Activated CD8-positive, alpha-beta T cell treated with anti-CD3 and anti-CD28 coated beads, Interleukin-2, amount 10 ng/mL, durations not matched to agents 7 days and 5 days (primary cell): ENCODE measurements at regions of chr7 and their contacts with region 1.

Region 1: GRCh38 chr7:36627836-36628235 is 96.5 kb downstream of the AOAH start:
- DNase-seq: no peak
- ATAC-seq: no peak
- H3K4me3 Mint-ChIP-seq: no peak overlapping the region
- H3K27ac Mint-ChIP-seq: no peak overlapping the region
- H3K4me1 Mint-ChIP-seq: peaks cover 11% of the 10 kb centered on the region
- H3K27me3 Mint-ChIP-seq: no peaks in the 10 kb centered on the region

Region 2: GRCh38 chr7:36597090-36597775 is 30.6 kb before region 1 on chr7:
- CTCF ChIA-PET with region 1: no interaction called
- POLR2A ChIA-PET with region 1: no interaction called
- DNase-seq: no peak
- ATAC-seq: no peak
- H3K4me3 Mint-ChIP-seq: no peak overlapping the region
- H3K27ac Mint-ChIP-seq: no peak overlapping the region
- H3K4me1 Mint-ChIP-seq: peaks cover 26% of the 10 kb centered on the region
- H3K27me3 Mint-ChIP-seq: no peaks in the 10 kb centered on the region

Region 3: DNA sequence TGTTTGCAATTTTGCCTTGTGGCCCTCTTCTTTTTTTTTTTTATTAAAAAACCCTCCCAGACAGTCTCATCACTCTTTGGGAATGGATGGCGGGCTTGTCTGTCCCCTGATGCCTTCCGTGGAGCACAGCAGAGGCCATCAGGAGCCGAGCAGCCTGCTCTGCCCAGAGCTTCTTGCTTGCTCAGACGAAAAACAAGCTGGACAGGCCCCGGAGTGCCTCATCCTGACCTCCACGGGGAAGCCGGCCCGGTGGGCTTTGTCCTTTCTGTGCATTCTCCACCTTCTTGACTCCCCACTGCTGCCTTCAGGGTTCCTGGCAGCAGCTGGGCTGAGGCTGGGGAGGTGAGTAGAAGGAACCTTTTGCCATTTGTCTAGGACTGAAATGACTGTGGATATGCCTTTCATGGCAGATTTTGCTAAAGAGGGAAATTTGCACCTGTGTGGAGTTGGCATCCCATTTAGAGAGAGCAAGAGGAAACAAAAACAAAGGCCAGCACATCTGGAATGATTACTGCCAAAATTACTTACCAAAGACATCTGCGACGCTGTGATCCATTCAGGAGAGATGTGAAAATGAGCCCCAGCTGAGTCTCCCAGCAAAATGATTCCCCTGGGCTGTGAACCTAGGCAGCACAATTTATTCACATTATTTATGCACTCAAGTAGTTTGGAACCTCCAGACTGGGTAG is 11.8 kb before region 1 on chr7:
- CTCF ChIA-PET with region 1: no interaction called
- POLR2A ChIA-PET with region 1: no interaction called
- DNase-seq: no peak
- ATAC-seq: no peak
- H3K4me3 Mint-ChIP-seq: no peak overlapping the region
- H3K27ac Mint-ChIP-seq: no peak overlapping the region
- H3K4me1 Mint-ChIP-seq: peaks cover 12% of the 10 kb centered on the region
- H3K27me3 Mint-ChIP-seq: no peaks in the 10 kb centered on the region

Region 4: GRCh38 chr7:36639826-36640225 is 12.0 kb after region 1 on chr7:
- CTCF ChIA-PET with region 1: interaction called, 10 read pairs
- POLR2A ChIA-PET with region 1: interaction called, 3 read pairs
- DNase-seq: peak; percentile 85
- ATAC-seq: peak; percentile 91
- H3K4me3 Mint-ChIP-seq: peak overlapping the region; percentile 66
- H3K27ac Mint-ChIP-seq: peak overlapping the region; percentile 97
- H3K4me1 Mint-ChIP-seq: peaks cover 70% of the 10 kb centered on the region
- H3K27me3 Mint-ChIP-seq: no peaks in the 10 kb centered on the region